Breast epithelium (tissue), 4 donors: ENCODE measurements at regions of chr1 and their contacts with region 1.

Region 1: DNA sequence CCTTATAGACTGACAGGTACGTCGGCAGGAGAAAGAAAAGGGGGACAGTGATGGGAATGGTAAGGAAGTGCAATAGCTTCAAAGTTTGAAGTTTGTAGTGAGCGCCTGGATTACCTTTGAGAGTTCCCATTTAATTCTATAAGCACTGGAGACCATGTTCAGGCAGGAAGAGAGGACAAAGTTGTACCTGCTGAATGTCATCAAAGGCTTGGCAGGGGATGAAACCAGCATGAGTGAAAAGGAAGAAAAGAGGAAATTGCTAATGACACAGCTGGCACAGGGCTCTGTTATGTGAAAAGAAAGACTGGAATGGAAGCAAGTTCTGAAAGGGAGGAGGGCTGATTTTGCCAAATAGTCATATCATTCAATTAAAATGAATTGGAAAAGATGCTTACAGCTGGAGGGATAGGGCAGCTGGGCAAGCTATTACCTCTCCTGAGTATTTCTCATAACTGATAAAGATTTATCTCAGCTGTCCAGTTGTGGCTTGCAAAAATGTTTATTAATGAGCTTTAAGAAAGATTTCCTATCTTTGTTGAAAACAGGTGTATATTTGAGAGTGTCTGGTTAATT is 109.2 kb downstream of the HMCN1 start:
- DNase-seq: no peak
- H3K4me3 ChIP-seq: no peak overlapping the region
- H3K27ac ChIP-seq: no peak overlapping the region
- H3K4me1 ChIP-seq: no peaks in the 10 kb centered on the region
- H3K27me3 ChIP-seq: no peaks in the 10 kb centered on the region
- CTCF ChIP-seq: no peak
- POLR2A ChIP-seq: no peak

Region 2: DNA sequence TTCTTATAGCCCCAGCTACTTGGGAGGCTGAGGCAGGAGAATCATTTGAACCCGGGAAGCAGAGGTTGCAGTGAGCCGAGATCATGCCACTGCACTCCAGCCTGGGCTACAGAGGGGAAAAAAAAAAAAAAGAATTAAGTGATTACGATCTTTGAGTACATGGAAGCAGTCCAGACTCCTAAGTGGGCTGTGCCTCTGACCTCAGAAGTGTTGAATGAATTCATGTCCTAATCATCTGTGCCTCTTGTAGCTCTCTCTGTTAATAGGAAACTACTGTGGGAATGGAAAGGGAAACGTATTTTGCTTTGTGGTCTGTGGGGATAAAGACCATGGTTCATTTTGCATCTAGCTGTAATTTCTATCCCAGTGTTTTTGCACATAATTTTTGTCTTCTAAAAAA is 518.0 kb before region 1 on chr1:
- intact Hi-C with region 1: loop called (anchors 5 kb)
- DNase-seq: no peak
- H3K4me3 ChIP-seq: no peak overlapping the region
- H3K27ac ChIP-seq: no peak overlapping the region
- H3K4me1 ChIP-seq: no peaks in the 10 kb centered on the region
- H3K27me3 ChIP-seq: no peaks in the 10 kb centered on the region
- CTCF ChIP-seq: no peak
- POLR2A ChIP-seq: no peak

Region 3: GRCh38 chr1:185790194-185790735 is 53.1 kb before region 1 on chr1:
- intact Hi-C with region 1: no loop called
- DNase-seq: no peak
- H3K4me3 ChIP-seq: no peak overlapping the region
- H3K27ac ChIP-seq: peak overlapping the region in 1 of 2 donors; percentile 51
- H3K4me1 ChIP-seq: no peaks in the 10 kb centered on the region
- H3K27me3 ChIP-seq: no peaks in the 10 kb centered on the region
- CTCF ChIP-seq: no peak
- POLR2A ChIP-seq: no peak